GM12878 (cell line): ENCODE measurements at regions of chr9 and their contacts with region 1.

Region 1: GRCh38 chr9:5608298-5609225 is 20.3 kb upstream of the RIC1 start:
- DNase-seq: no peak
- ATAC-seq: peak; percentile 89
- H3K4me3 ChIP-seq: peak overlapping the region; percentile 53
- H3K27ac ChIP-seq: peak overlapping the region; percentile 70
- H3K4me1 ChIP-seq: peaks cover 10% of the 10 kb centered on the region
- H3K27me3 ChIP-seq: no peaks in the 10 kb centered on the region
- CTCF ChIP-seq: peak in 1 of 3 experiments; percentile 32; a peak in 1 of 6 replicates
- EP300 ChIP-seq: no peak
- POLR2A ChIP-seq: 0 out of 2 replicates have a peak, but pooled peaks have one; percentile 38
- RAD21 ChIP-seq: peak; percentile 49

Region 2: GRCh38 chr9:5073701-5074100 is 534.9 kb before region 1 on chr9:
- CTCF ChIA-PET with region 1: no interaction called
- POLR2A ChIA-PET with region 1: no interaction called
- RAD21 ChIA-PET with region 1: no interaction called
- SMC1A ChIA-PET with region 1: no interaction called
- in situ Hi-C with region 1: loop called (anchors 5 kb)
- intact Hi-C with region 1: no loop called
- DNase-seq: no peak
- ATAC-seq: peak; percentile 65
- H3K4me3 ChIP-seq: no peak overlapping the region
- H3K27ac ChIP-seq: no peak overlapping the region
- H3K4me1 ChIP-seq: peaks cover 5% of the 10 kb centered on the region; the same call in 1 of the 2 replicates
- H3K27me3 ChIP-seq: no peaks in the 10 kb centered on the region
- CTCF ChIP-seq: peak in 1 of 3 experiments; percentile 49; a peak in 2 of 6 replicates
- EP300 ChIP-seq: no peak
- POLR2A ChIP-seq: no peak
- RAD21 ChIP-seq: peak; percentile 39; the same call in 1 of the 2 replicates

Region 3: DNA sequence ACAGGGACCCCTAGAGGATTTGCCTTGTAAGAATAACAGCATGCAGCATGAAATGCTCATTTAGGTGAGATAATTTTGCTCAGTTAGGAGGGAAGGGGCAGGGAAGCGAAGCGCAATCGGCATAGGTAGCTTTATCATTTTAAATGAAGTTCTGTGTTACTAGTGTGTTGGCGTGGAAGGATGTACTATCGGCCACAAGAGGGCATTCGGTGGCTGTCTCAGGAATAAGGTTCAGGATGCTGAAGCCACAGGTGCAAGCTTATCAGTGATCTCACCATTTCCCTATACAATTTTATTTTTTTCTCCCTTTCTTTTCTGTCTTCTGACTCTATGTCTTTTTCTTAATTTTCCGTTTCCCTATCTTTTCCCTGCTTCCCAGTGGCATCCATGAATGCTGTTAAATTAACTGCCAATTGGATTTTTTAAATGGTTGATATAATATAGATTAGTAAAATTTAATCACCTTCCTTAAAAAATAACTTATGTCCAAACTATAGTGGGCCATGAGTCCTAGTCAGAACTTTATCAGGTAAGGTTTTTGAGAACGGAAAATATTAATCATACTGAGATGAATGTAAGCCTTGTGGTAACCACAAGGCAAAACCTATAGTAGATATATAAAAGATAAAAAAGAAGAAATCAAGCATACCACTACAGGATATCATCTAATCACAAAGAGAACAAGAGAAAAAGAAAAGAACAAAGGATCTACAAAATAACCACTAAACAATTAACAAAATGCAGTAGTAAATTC is 422.0 kb before region 1 on chr9:
- CTCF ChIA-PET with region 1: no interaction called
- POLR2A ChIA-PET with region 1: no interaction called
- RAD21 ChIA-PET with region 1: no interaction called
- SMC1A ChIA-PET with region 1: no interaction called
- in situ Hi-C with region 1: no loop called
- intact Hi-C with region 1: loop called (anchors 5 kb)
- DNase-seq: no peak
- ATAC-seq: peak; percentile 46
- H3K4me3 ChIP-seq: no peak overlapping the region
- H3K27ac ChIP-seq: no peak overlapping the region
- H3K4me1 ChIP-seq: no peaks in the 10 kb centered on the region
- H3K27me3 ChIP-seq: no peaks in the 10 kb centered on the region
- CTCF ChIP-seq: peak in 2 of 3 experiments; percentile 19 to 37; a peak in 2 of 6 replicates
- EP300 ChIP-seq: no peak
- POLR2A ChIP-seq: no peak
- RAD21 ChIP-seq: peak; percentile 37

Region 4: DNA sequence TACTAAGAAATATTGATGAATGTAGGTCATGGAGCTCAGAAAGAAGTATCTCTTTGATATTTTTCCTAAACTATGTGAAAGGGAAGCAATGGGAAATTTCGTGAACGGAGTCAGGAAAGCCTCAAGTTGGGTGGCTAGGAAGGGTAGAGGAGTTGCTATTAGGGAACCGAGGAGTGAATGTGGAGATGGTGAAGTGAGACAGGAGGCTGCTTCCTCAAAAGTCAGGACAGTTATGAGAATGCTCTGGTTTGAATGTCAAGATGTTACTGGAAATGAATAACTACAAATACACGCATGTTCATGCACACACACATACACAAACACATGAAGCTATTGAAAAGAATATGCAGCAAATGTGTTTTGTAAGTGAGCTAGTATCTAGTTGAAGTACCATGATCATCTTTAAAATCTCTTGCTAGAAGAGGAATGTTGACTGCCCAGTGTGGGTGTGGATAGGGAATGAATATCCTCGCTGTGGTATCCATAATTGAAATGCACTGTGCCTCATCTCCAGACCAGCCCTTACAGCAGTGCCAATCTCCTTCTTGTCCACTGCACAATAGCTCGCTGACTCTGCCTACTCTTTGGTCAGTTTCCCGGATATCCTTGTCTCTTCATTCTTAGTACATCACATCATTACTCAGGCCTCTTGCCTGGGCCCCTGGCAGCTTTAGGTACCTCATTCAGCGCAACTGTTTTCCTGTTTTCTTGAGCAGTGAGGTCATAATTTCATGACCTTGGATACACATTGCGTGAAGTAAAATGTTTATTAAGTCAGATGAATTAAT is 120.1 kb before region 1 on chr9:
- CTCF ChIA-PET with region 1: no interaction called
- POLR2A ChIA-PET with region 1: no interaction called
- RAD21 ChIA-PET with region 1: no interaction called
- SMC1A ChIA-PET with region 1: no interaction called
- in situ Hi-C with region 1: no loop called
- intact Hi-C with region 1: no loop called
- DNase-seq: no peak
- ATAC-seq: no peak
- H3K4me3 ChIP-seq: no peak overlapping the region
- H3K27ac ChIP-seq: no peak overlapping the region
- H3K4me1 ChIP-seq: peaks cover 9% of the 10 kb centered on the region
- H3K27me3 ChIP-seq: no peaks in the 10 kb centered on the region
- CTCF ChIP-seq: no peak
- EP300 ChIP-seq: no peak
- POLR2A ChIP-seq: no peak
- RAD21 ChIP-seq: no peak

Region 5: DNA sequence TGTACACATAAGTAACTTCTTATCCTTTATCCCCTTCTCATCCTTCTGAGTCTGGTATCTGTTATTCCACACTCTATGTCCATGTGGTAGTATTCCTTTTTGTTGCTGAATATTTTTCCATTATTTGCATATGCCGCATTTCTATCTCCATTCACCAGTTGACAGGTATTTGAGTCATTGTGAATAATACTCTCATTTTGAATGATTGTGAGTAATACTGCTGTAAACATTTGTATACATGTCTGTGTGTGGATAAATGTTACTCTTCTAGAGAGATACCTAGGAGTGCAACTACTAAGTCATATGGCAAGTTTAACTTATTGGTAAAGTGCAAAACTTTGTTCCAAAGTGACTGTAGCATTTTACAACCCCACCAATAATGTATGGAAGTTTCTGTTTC is 35.9 kb after region 1 on chr9:
- CTCF ChIA-PET with region 1: no interaction called
- POLR2A ChIA-PET with region 1: no interaction called
- RAD21 ChIA-PET with region 1: no interaction called
- SMC1A ChIA-PET with region 1: no interaction called
- in situ Hi-C with region 1: no loop called
- intact Hi-C with region 1: no loop called
- DNase-seq: no peak
- ATAC-seq: peak; percentile 60
- H3K4me3 ChIP-seq: no peak overlapping the region
- H3K27ac ChIP-seq: no peak overlapping the region
- H3K4me1 ChIP-seq: no peaks in the 10 kb centered on the region
- H3K27me3 ChIP-seq: no peaks in the 10 kb centered on the region
- CTCF ChIP-seq: no peak
- EP300 ChIP-seq: no peak
- POLR2A ChIP-seq: no peak
- RAD21 ChIP-seq: no peak

Region 6: GRCh38 chr9:5773324-5773999 is 164.9 kb after region 1 on chr9:
- CTCF ChIA-PET with region 1: interaction called, 13 read pairs
- POLR2A ChIA-PET with region 1: no interaction called
- RAD21 ChIA-PET with region 1: interaction called, 4 read pairs
- SMC1A ChIA-PET with region 1: interaction called, 8 read pairs
- in situ Hi-C with region 1: no loop called
- intact Hi-C with region 1: no loop called
- DNase-seq: no peak
- ATAC-seq: no peak
- H3K4me3 ChIP-seq: no peak overlapping the region
- H3K27ac ChIP-seq: no peak overlapping the region
- H3K4me1 ChIP-seq: peaks cover 5% of the 10 kb centered on the region; the same call in 1 of the 2 replicates
- H3K27me3 ChIP-seq: no peaks in the 10 kb centered on the region
- CTCF ChIP-seq: peak; percentile 13 to 18 (median 17); a peak in 3 of 6 replicates
- EP300 ChIP-seq: no peak
- POLR2A ChIP-seq: no peak
- RAD21 ChIP-seq: peak; percentile 19; the same call in 1 of the 2 replicates

Region 7: DNA sequence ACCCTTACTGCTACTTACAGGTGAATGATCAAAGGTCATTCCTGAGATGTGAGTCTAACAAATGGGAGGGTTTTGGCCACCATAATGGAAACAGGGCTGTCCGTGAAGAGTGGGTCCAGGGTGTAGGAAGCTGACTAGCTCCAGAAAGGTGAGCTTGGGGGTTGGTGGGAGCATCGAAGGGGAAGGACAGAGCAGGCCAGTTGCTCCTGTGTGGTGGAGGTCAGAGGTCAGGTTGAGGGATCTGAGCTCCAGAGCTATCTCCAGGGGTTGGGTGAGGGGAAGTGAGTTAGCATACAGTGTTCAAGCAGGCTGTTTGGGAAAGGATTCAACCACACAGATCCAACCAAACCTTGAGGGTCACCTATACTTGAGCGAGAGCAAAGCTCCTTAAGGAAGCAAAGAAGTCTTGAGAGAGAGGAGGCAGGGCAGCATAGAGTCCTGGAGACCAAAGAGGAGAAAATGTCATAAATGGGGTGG is 1055.7 kb after region 1 on chr9:
- CTCF ChIA-PET with region 1: no interaction called
- POLR2A ChIA-PET with region 1: no interaction called
- RAD21 ChIA-PET with region 1: no interaction called
- SMC1A ChIA-PET with region 1: no interaction called
- in situ Hi-C with region 1: no loop called
- intact Hi-C with region 1: no loop called
- DNase-seq: no peak
- ATAC-seq: no peak
- H3K4me3 ChIP-seq: no peak overlapping the region
- H3K27ac ChIP-seq: no peak overlapping the region
- H3K4me1 ChIP-seq: no peaks in the 10 kb centered on the region
- H3K27me3 ChIP-seq: no peaks in the 10 kb centered on the region
- CTCF ChIP-seq: no peak
- EP300 ChIP-seq: no peak
- POLR2A ChIP-seq: no peak
- RAD21 ChIP-seq: no peak